Prostate gland (tissue), 2 donors: ENCODE measurements at regions of chr3 and their contacts with region 1.

Region 1: GRCh38 chr3:124887177-124887931 is at the start of gene ITGB5:
- DNase-seq: peak; percentile 82
- H3K4me3 ChIP-seq: peak within 1 kb of the TSS; percentile 79 to 80
- H3K27ac ChIP-seq: peak within 1 kb of the TSS; percentile 92 to 93
- H3K4me1 ChIP-seq: peaks cover 6% of the 10 kb centered on the region
- H3K27me3 ChIP-seq: no peaks in the 10 kb centered on the region
- CTCF ChIP-seq: peak in 1 of 4 experiments; percentile 14
- POLR2A ChIP-seq: peak; percentile 81
- total RNA-seq, gene ITGB5: 123 to 154 TPM

Region 2: GRCh38 chr3:124780761-124781475 is 106.4 kb before region 1 on chr3:
- intact Hi-C with region 1: loop called (anchors 5 kb)
- DNase-seq: peak; percentile 33
- H3K4me3 ChIP-seq: no peak overlapping the region
- H3K27ac ChIP-seq: peak overlapping the region; percentile 68 to 81
- H3K4me1 ChIP-seq: peaks cover 12% of the 10 kb centered on the region
- H3K27me3 ChIP-seq: no peaks in the 10 kb centered on the region
- CTCF ChIP-seq: no peak
- POLR2A ChIP-seq: no peak